ENCODE measurements at regions of chr6 and their contacts with region 1.

Region 1: GRCh38 chr6:162736961-162737360 is 9.2 kb downstream of the PACRG start:
- DNase-seq: no peak
- ATAC-seq: no peak

Region 2: DNA sequence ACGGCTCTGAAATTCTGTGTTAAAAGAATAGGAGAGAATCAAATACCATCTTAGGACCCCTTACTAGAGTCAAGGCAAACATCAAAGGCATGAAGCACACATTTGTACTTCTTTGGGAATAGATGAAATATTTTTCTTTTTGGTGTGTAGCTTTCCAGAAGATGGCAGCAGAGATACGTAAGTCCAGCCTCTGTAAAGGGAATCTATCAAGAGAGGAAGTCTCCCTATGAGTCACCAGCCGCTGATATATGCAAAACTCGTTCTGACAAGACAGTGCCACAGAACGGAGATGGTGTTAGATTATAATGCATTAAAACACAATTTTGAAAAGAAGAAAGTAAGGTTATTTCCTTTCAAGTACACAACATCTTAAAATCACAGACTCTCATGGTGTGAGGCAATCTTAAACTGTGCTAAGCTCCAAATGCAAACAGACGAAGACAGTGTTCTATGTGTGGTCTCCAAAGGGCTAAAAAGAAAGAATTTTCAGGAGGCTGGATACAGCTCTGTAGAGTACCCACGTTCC is 1343.1 kb before region 1 on chr6:
- intact Hi-C with region 1: loop called (anchors 10 kb)
- DNase-seq: no peak
- ATAC-seq: peak; percentile 82

Region 3: GRCh38 chr6:162442687-162443086 is 294.3 kb before region 1 on chr6:
- intact Hi-C with region 1: loop called (anchors 2 kb)
- DNase-seq: no peak
- ATAC-seq: peak; percentile 74